Heart right ventricle (tissue), 16 donors: ENCODE measurements at regions of chr2 and their contacts with region 1.

Region 1: DNA sequence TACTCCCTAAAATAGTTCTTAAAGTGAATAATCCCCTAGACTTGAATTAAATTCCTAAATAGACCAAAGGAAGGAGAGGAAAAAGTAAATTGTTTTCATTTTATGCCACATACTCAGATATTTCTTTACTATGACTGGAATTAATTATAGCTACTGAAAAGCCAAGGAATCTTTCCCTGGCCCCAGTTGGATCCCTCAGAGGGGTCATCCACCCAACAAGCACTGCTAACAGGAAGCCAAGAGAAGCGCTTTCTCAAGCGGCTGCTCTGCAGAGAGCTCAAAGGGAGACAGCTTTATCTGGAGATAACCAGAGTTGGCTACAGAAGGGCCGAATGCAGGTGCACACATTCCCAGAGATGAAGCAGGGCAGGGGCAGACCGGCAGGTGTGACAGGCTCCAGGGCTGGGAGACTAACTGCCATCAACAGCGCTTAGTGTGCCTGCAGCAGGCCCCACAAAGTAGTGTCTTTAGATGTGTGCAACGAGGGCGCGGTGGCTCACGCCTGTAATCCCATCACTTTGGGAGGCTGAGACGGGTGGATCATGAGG is 51.1 kb downstream of the POLR1A start:
- DNase-seq: no peak
- ATAC-seq: no peak
- H3K4me3 ChIP-seq: no peak overlapping the region
- H3K27ac ChIP-seq: no peak overlapping the region
- H3K4me1 ChIP-seq: peaks cover 0 to 5% (median 0%) of the 10 kb centered on the region in 9 donors
- H3K27me3 ChIP-seq: no peaks in the 10 kb centered on the region
- CTCF ChIP-seq: no peak

Region 2: DNA sequence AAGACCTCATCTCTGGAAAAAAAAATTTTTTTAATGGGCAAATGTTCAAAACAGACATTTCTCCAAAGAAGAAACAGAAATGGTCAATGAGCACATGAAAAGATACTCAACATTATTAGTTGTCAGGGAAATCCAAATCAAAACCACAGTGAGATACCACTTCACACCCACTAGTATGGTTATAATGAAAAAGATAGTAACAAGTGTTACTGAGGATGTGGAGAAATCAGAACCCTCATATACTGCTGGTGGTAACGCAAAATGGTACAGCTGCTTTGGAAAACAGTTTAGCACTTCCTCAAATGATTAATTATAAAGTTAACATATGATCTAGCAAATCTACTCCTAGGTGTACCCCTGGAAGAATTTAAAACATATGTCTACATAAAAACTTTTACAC is 950.4 kb before region 1 on chr2:
- intact Hi-C with region 1: loop called in 1 of 10 experiments (anchors 5 kb)
- DNase-seq: no peak
- ATAC-seq: no peak
- H3K4me3 ChIP-seq: no peak overlapping the region
- H3K27ac ChIP-seq: no peak overlapping the region
- H3K4me1 ChIP-seq: no peaks in the 10 kb centered on the region
- H3K27me3 ChIP-seq: peaks cover 0 to 3% (median 0%) of the 10 kb centered on the region in 7 donors
- CTCF ChIP-seq: no peak

Region 3: GRCh38 chr2:86229221-86229620 is 174.6 kb after region 1 on chr2:
- intact Hi-C with region 1: no loop called
- DNase-seq: no peak
- ATAC-seq: no peak
- H3K4me3 ChIP-seq: no peak overlapping the region
- H3K27ac ChIP-seq: no peak overlapping the region
- H3K4me1 ChIP-seq: peaks cover 9 to 34% (median 17%) of the 10 kb centered on the region in 9 donors
- H3K27me3 ChIP-seq: no peaks in the 10 kb centered on the region
- CTCF ChIP-seq: no peak

Region 4: DNA sequence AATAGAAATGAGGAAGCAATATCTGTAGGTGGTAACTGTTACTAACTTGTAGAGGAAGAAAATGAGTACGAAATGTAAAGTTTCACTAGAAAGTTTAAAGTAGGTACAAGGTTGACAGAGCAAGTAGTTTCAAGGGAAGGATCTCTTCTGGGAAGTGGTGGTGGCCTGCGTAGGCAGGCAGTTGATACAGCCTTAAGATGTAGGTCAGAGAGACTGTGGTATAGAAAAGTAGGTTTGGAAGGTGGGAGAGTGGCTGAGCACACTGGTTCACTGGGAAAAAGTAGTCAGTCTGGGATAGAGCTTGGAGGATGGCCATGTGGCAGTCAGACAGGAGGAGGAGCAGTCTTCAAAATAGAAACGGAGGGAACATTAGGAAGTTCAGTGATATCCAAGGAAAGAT is 410.0 kb after region 1 on chr2:
- intact Hi-C with region 1: no loop called
- DNase-seq: peak in 1 of 2 donors; percentile 48
- ATAC-seq: peak in 7 of 8 donors; percentile 55 to 81 (median 76)
- H3K4me3 ChIP-seq: no peak overlapping the region
- H3K27ac ChIP-seq: peak overlapping the region in 1 of 10 donors; percentile 8
- H3K4me1 ChIP-seq: peaks cover 0 to 71% (median 33%) of the 10 kb centered on the region in 9 donors
- H3K27me3 ChIP-seq: no peaks in the 10 kb centered on the region
- CTCF ChIP-seq: peak in 1 of 9 donors; percentile 11